ENCODE measurements at regions of chr2 and their contacts with region 1.

Region 1: GRCh38 chr2:55050133-55050994 is at the start of gene RTN4:
- DNase-seq: peak; percentile 100
- H3K4me3 ChIP-seq: peak within 1 kb of the TSS; percentile 85 to 100 (median 98)
- H3K27ac ChIP-seq: peak within 1 kb of the TSS; percentile 96 to 100 (median 100)
- H3K4me1 ChIP-seq: peaks cover 10 to 47% (median 41%) of the 10 kb centered on the region in 4 donors
- H3K27me3 ChIP-seq: no peaks in the 10 kb centered on the region
- CTCF ChIP-seq: peak in 1 of 3 experiments; percentile 34
- EP300 ChIP-seq: no peak
- POLR2A ChIP-seq: peak; percentile 96
- total RNA-seq, gene RTN4: 214 to 272 (median 251) TPM

Region 2: GRCh38 chr2:54899576-54900200 is 150.7 kb before region 1 on chr2:
- intact Hi-C with region 1: loop called (anchors 10 kb)
- DNase-seq: no peak
- H3K4me3 ChIP-seq: no peak overlapping the region
- H3K27ac ChIP-seq: no peak overlapping the region
- H3K4me1 ChIP-seq: no peaks in the 10 kb centered on the region
- H3K27me3 ChIP-seq: no peaks in the 10 kb centered on the region
- CTCF ChIP-seq: peak; percentile 62 to 66 (median 65)
- EP300 ChIP-seq: no peak
- POLR2A ChIP-seq: no peak

Region 3: DNA sequence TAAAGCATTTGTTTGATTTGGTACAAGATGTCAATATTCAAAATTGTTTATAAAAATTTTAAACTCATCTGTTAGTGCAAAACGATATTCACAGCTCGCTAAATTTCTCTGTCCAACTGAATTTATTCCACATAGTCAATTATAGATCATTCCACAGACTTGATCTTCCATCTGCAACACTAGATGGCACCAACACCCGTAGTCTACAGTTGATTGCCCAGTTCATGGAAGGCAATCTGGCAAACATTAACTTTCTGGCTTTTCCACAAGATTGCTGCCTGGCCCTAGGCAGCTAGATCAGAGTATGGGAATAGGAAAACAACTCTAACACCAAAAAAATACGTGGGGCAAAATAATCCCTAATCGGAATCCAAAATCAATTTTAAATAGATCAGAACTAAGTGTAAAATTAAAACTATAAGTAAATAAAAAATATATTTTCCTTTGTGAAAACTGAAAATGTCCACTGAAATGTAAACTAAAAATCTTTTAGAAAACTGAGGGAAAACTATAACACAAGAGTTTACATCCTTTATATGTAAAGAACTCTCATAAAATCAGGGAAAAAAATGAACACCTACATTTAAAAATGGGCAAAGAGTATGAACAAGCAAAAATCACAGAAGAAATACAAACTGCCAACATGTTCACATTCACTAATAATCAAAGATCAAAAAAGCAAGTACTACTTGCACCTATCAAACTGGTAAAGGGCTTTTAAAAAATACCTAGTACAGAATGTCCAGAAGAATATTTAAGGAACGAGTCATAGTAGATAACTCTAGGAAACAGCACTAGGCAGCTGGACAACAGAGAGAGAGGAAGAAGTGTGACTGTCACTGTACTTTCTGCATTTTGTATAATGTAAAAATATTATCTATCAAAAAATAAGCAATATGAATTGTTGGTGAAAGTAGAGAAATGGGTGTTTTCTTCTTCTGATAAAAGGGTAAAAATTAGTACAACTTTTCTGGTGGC is 35.1 kb before region 1 on chr2:
- intact Hi-C with region 1: loop called (anchors 2 kb)
- DNase-seq: no peak
- H3K4me3 ChIP-seq: no peak overlapping the region
- H3K27ac ChIP-seq: no peak overlapping the region
- H3K4me1 ChIP-seq: peaks cover 36 to 79% (median 76%) of the 10 kb centered on the region in 4 donors
- H3K27me3 ChIP-seq: no peaks in the 10 kb centered on the region
- CTCF ChIP-seq: peak; percentile 59 to 70 (median 65)
- EP300 ChIP-seq: no peak
- POLR2A ChIP-seq: no peak

Region 4: GRCh38 chr2:55111570-55112228 is 61.3 kb after region 1 on chr2:
- intact Hi-C with region 1: loop called (anchors 5 kb)
- DNase-seq: no peak
- H3K4me3 ChIP-seq: peak overlapping the region in 3 of 4 donors; percentile 15 to 19 (median 15)
- H3K27ac ChIP-seq: peak overlapping the region; percentile 88 to 91 (median 90)
- H3K4me1 ChIP-seq: peaks cover 24 to 88% (median 76%) of the 10 kb centered on the region in 4 donors
- H3K27me3 ChIP-seq: no peaks in the 10 kb centered on the region
- CTCF ChIP-seq: no peak
- EP300 ChIP-seq: no peak
- POLR2A ChIP-seq: no peak

Region 5: DNA sequence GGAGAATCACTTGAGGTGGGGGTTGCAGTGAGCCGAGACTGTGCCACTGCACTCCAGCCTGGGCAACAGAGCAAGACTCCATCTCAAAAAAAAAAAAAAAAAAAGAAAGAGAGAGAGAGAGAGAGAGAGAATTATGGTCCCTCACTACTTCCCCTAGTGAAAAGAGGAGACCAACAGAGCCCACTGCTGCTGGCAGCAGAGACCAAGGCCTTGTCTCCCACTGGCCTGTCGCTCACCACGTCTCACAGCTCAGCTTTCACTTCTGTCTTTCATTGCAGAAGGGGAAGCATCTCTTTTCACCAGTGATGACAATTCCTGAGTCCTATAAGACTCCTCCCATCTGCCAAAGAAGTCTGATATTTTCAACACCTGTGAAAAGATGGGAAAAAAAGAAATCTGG is 100.5 kb after region 1 on chr2:
- intact Hi-C with region 1: no loop called
- DNase-seq: no peak
- H3K4me3 ChIP-seq: no peak overlapping the region
- H3K27ac ChIP-seq: no peak overlapping the region
- H3K4me1 ChIP-seq: peaks cover 12 to 58% (median 50%) of the 10 kb centered on the region in 4 donors
- H3K27me3 ChIP-seq: no peaks in the 10 kb centered on the region
- CTCF ChIP-seq: no peak
- EP300 ChIP-seq: no peak
- POLR2A ChIP-seq: no peak

Region 6: DNA sequence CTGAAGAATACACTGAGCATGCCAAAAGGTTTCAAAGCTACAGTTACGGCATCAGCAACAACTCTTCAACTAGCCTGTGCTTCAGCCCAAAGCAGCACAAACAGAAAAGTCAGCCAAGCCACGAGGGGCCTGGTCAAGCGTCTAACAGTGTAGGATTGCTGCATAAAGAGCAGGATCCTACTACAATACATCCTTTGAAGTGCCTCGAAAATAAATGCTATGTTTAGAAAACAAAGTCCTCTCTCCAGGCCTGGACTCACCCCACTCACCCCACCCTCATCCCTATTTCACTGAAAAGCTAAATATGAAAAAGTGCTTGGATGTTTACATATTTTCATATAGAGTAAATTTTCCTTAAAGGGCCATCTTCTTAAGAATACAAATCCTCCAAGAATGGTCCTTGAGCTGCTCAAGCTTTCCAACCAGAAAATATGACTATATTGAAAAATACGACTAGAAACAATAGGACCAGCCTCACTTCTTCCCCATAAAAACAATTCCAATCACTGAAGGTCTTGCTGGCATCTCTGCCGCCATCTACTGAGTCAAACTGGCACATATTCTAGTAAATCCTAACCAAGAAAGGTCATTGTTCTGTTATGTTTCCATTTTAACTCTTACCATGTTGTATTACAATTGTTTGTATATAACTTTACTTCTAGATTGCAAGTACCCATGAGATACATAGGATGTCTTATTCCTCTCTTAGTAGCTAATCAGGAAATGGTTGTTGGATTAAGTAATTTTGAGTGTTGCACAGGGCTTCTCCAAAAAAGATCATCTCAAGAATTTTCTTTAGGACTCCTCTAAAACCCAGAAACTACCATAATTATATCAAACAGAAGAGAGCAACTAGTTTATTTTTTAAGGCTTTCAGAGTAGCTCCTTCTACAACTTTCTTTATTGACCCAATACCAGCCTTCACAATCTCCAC is 118.1 kb after region 1 on chr2:
- intact Hi-C with region 1: loop called (anchors 2 kb)
- DNase-seq: peak; percentile 81
- H3K4me3 ChIP-seq: no peak overlapping the region
- H3K27ac ChIP-seq: peak overlapping the region; percentile 67 to 74 (median 70)
- H3K4me1 ChIP-seq: peaks cover 9 to 67% (median 61%) of the 10 kb centered on the region in 4 donors
- H3K27me3 ChIP-seq: no peaks in the 10 kb centered on the region
- CTCF ChIP-seq: peak; percentile 68 to 85 (median 73)
- EP300 ChIP-seq: no peak
- POLR2A ChIP-seq: no peak

Region 7: GRCh38 chr2:55550368-55551102 is 500.2 kb after region 1 on chr2:
- intact Hi-C with region 1: no loop called
- DNase-seq: no peak
- H3K4me3 ChIP-seq: no peak overlapping the region
- H3K27ac ChIP-seq: no peak overlapping the region
- H3K4me1 ChIP-seq: no peaks in the 10 kb centered on the region
- H3K27me3 ChIP-seq: no peaks in the 10 kb centered on the region
- CTCF ChIP-seq: no peak
- EP300 ChIP-seq: no peak
- POLR2A ChIP-seq: no peak

Measured in esophagus muscularis mucosa (tissue), 4 donors.